Natural killer cell (primary cell): ENCODE measurements at regions of chr19 and their contacts with region 1.

Region 1: DNA sequence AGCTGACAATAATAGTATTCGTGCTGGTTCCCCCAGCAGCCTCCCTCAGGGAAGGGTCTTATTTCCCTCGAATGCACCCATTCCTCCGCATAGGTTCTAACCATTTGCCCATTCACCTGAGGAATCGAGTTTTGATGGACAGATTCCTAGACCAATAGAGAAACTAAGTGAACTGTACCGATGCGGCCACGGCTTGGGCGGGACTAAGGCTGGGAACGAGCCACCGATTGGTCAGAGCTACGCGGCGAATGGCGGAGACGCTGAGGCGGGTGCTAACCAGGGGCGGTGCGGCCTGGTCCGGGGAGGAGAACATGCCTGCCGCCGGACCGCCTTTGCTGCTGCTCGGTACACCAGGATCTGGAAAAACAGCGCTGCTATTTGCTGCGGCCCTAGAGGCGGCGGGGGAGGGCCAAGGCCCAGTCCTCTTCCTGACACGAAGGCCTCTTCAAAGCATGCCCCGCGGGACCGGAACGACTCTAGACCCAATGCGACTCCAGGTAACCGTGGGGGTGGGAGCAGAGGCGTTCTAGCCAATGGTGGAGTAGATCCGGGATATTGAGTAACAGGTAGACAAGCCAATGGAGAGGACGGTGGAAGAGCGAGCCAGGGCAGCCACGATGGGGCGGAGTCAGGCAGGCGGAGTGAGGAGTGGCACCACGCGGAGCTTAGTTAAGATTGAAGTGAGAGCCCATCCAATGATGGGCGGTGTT is at the start of gene SWSAP1:
- DNase-seq: peak; percentile 97 to 99
- ATAC-seq: peak; percentile 88 to 97 (median 89)
- H3K4me3 ChIP-seq: peak within 1 kb of the TSS; percentile 84
- H3K4me3 Mint-ChIP-seq: no peak within 1 kb of the TSS
- H3K27ac ChIP-seq: peak within 1 kb of the TSS; percentile 94
- H3K27ac Mint-ChIP-seq: no peak within 1 kb of the TSS
- H3K4me1 ChIP-seq: peaks cover 31% of the 10 kb centered on the region
- H3K4me1 Mint-ChIP-seq: peaks cover 6% of the 10 kb centered on the region in 2 donors
- H3K27me3 ChIP-seq: no peaks in the 10 kb centered on the region
- H3K27me3 Mint-ChIP-seq: no peaks in the 10 kb centered on the region
- CTCF ChIP-seq: no peak
- total RNA-seq, gene SWSAP1: 2.1 to 2.9 (median 2.8) TPM

Region 2: GRCh38 chr19:10968527-10969135 is 406.0 kb before region 1 on chr19:
- intact Hi-C with region 1: no loop called
- DNase-seq: peak in 1 of 2 donors; percentile 25
- ATAC-seq: no peak
- H3K4me3 ChIP-seq: no peak overlapping the region
- H3K4me3 Mint-ChIP-seq: no peak overlapping the region
- H3K27ac ChIP-seq: no peak overlapping the region
- H3K27ac Mint-ChIP-seq: no peak overlapping the region
- H3K4me1 ChIP-seq: peaks cover 19% of the 10 kb centered on the region
- H3K4me1 Mint-ChIP-seq: peaks cover 25 to 30% of the 10 kb centered on the region in 2 donors
- H3K27me3 ChIP-seq: no peaks in the 10 kb centered on the region
- H3K27me3 Mint-ChIP-seq: no peaks in the 10 kb centered on the region
- CTCF ChIP-seq: no peak

Region 3: GRCh38 chr19:11014403-11014911 is 360.1 kb before region 1 on chr19:
- intact Hi-C with region 1: no loop called
- DNase-seq: no peak
- ATAC-seq: no peak
- H3K4me3 ChIP-seq: no peak overlapping the region
- H3K4me3 Mint-ChIP-seq: no peak overlapping the region
- H3K27ac ChIP-seq: no peak overlapping the region
- H3K27ac Mint-ChIP-seq: no peak overlapping the region
- H3K4me1 ChIP-seq: no peaks in the 10 kb centered on the region
- H3K4me1 Mint-ChIP-seq: no peaks in the 10 kb centered on the region
- H3K27me3 ChIP-seq: no peaks in the 10 kb centered on the region
- H3K27me3 Mint-ChIP-seq: no peaks in the 10 kb centered on the region
- CTCF ChIP-seq: no peak

Region 4: GRCh38 chr19:11346092-11346940 is 28.3 kb before region 1 on chr19 and contains the starts of genes CCDC159 and TMEM205:
- intact Hi-C with region 1: loop called (anchors 1 kb)
- DNase-seq: peak; percentile 97 to 98
- ATAC-seq: peak; percentile 92 to 98 (median 93)
- H3K4me3 ChIP-seq: peak within 1 kb of the TSS; percentile 96
- H3K4me3 Mint-ChIP-seq: peak within 1 kb of the TSS; percentile 99
- H3K27ac ChIP-seq: peak within 1 kb of the TSS; percentile 91
- H3K27ac Mint-ChIP-seq: peak within 1 kb of the TSS; percentile 98
- H3K4me1 ChIP-seq: peaks cover 21% of the 10 kb centered on the region
- H3K4me1 Mint-ChIP-seq: peaks cover 18 to 32% of the 10 kb centered on the region in 2 donors
- H3K27me3 ChIP-seq: no peaks in the 10 kb centered on the region
- H3K27me3 Mint-ChIP-seq: no peaks in the 10 kb centered on the region
- CTCF ChIP-seq: no peak
- total RNA-seq, gene CCDC159: 86.9 to 94.9 (median 91.8) TPM
- total RNA-seq, gene TMEM205: 25.0 to 29.9 (median 29.5) TPM

Region 5: GRCh38 chr19:11355160-11356073 is 19.2 kb before region 1 on chr19 and contains the start of gene PLPPR2:
- intact Hi-C with region 1: loop called (anchors 2 kb)
- DNase-seq: peak; percentile 91 to 92
- ATAC-seq: peak; percentile 95 to 97 (median 96)
- H3K4me3 ChIP-seq: no peak within 1 kb of the TSS
- H3K4me3 Mint-ChIP-seq: peak within 1 kb of the TSS; percentile 80
- H3K27ac ChIP-seq: no peak within 1 kb of the TSS
- H3K27ac Mint-ChIP-seq: peak within 1 kb of the TSS; percentile 5 to 89
- H3K4me1 ChIP-seq: peaks cover 14% of the 10 kb centered on the region
- H3K4me1 Mint-ChIP-seq: peaks cover 12 to 21% of the 10 kb centered on the region in 2 donors
- H3K27me3 ChIP-seq: no peaks in the 10 kb centered on the region
- H3K27me3 Mint-ChIP-seq: no peaks in the 10 kb centered on the region
- CTCF ChIP-seq: no peak
- total RNA-seq, gene PLPPR2: 13.3 to 21.1 (median 16.1) TPM

Region 6: GRCh38 chr19:11435058-11435832 is 60.7 kb after region 1 on chr19 and contains the starts of genes ODAD3 and PRKCSH:
- intact Hi-C with region 1: loop called (anchors 2 kb)
- DNase-seq: peak; percentile 94 to 99
- ATAC-seq: peak; percentile 93 to 98 (median 93)
- H3K4me3 ChIP-seq: peak within 1 kb of the TSS; percentile 84
- H3K4me3 Mint-ChIP-seq: peak within 1 kb of the TSS; percentile 99
- H3K27ac ChIP-seq: peak within 1 kb of the TSS; percentile 75
- H3K27ac Mint-ChIP-seq: peak within 1 kb of the TSS; percentile 97 to 99
- H3K4me1 ChIP-seq: peaks cover 26% of the 10 kb centered on the region
- H3K4me1 Mint-ChIP-seq: peaks cover 21 to 29% of the 10 kb centered on the region in 2 donors
- H3K27me3 ChIP-seq: no peaks in the 10 kb centered on the region
- H3K27me3 Mint-ChIP-seq: no peaks in the 10 kb centered on the region
- CTCF ChIP-seq: peak; percentile 84
- total RNA-seq, gene ODAD3: not detected
- total RNA-seq, gene PRKCSH: 320 to 367 (median 327) TPM

Region 7: GRCh38 chr19:11505032-11505503 is 130.5 kb after region 1 on chr19:
- intact Hi-C with region 1: loop called (anchors 10 kb)
- DNase-seq: peak; percentile 94 to 97
- ATAC-seq: peak; percentile 92 to 97 (median 92)
- H3K4me3 ChIP-seq: peak overlapping the region; percentile 40
- H3K4me3 Mint-ChIP-seq: peak overlapping the region; percentile 89
- H3K27ac ChIP-seq: peak overlapping the region; percentile 78
- H3K27ac Mint-ChIP-seq: peak overlapping the region; percentile 88 to 92
- H3K4me1 ChIP-seq: peaks cover 16% of the 10 kb centered on the region
- H3K4me1 Mint-ChIP-seq: peaks cover 15 to 16% of the 10 kb centered on the region in 2 donors
- H3K27me3 ChIP-seq: no peaks in the 10 kb centered on the region
- H3K27me3 Mint-ChIP-seq: no peaks in the 10 kb centered on the region
- CTCF ChIP-seq: no peak